CD4-positive, alpha-beta T cell (primary cell): ENCODE measurements at regions of chr3 and their contacts with region 1.

Region 1: GRCh38 chr3:119676771-119677640 is at the start of gene COX17:
- DNase-seq: peak; percentile 92 to 99 (median 95)
- ATAC-seq: peak; percentile 87
- H3K4me3 ChIP-seq: peak within 1 kb of the TSS; percentile 68
- H3K4me3 Mint-ChIP-seq: peak within 1 kb of the TSS; percentile 87
- H3K27ac ChIP-seq: peak within 1 kb of the TSS; percentile 81 to 85
- H3K27ac Mint-ChIP-seq: peak within 1 kb of the TSS; percentile 91
- H3K4me1 ChIP-seq: peaks cover 8% of the 10 kb centered on the region
- H3K4me1 Mint-ChIP-seq: peaks cover 36% of the 10 kb centered on the region
- H3K27me3 ChIP-seq: no peaks in the 10 kb centered on the region
- H3K27me3 Mint-ChIP-seq: no peaks in the 10 kb centered on the region
- CTCF ChIP-seq: no peak
- total RNA-seq, gene COX17: 24.6 to 26.3 TPM

Region 2: DNA sequence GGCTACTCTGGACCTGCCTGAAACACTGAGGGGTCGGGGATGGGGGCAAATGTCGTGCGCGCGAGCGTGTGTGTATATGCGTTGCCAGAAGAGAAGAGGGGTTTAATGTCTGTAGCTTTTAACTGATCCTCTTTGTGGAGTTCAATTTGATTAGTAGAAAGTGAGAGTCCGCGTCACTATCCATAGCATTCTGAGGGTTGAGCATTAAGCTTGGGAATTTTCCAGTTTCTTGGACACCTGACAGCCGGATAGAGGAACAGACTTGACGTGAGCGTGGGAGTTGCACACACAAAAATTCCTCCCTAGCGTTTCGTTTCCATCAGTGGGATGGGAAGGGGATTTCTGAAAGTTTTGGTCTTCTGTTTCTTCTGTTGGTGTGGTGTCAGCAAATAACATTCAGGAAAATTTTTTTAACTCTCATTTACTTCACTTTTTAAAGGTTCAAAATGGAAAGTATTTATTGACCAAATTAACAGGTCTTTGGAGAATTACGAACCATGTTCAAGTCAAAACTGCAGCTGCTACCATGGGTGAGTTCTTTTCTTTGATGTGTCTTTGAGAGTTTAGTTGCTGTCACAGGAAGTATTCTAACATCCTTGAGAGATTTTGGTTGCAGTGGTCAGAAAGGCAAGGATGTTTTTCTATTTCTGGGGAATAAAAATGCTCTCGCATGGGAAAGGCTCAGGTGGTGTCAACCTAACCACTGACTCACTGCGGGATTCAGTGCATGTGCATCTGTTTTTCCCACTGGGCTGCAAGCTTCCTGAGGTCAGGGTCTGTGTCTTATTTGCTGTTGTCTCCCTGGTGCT is 207.4 kb before region 1 on chr3:
- CTCF ChIA-PET with region 1: no interaction called
- POLR2A ChIA-PET with region 1: no interaction called
- intact Hi-C with region 1: loop called in 1 of 2 experiments (anchors 5 kb)
- DNase-seq: peak in 3 of 14 experiments; percentile 21 to 32 (median 27)
- ATAC-seq: peak; percentile 20
- H3K4me3 ChIP-seq: peak overlapping the region; percentile 86
- H3K4me3 Mint-ChIP-seq: peak overlapping the region; percentile 98
- H3K27ac ChIP-seq: peak overlapping the region; percentile 37 to 81
- H3K27ac Mint-ChIP-seq: peak overlapping the region; percentile 90
- H3K4me1 ChIP-seq: peaks cover 28% of the 10 kb centered on the region
- H3K4me1 Mint-ChIP-seq: peaks cover 29% of the 10 kb centered on the region
- H3K27me3 ChIP-seq: no peaks in the 10 kb centered on the region
- H3K27me3 Mint-ChIP-seq: no peaks in the 10 kb centered on the region
- CTCF ChIP-seq: no peak

Region 3: DNA sequence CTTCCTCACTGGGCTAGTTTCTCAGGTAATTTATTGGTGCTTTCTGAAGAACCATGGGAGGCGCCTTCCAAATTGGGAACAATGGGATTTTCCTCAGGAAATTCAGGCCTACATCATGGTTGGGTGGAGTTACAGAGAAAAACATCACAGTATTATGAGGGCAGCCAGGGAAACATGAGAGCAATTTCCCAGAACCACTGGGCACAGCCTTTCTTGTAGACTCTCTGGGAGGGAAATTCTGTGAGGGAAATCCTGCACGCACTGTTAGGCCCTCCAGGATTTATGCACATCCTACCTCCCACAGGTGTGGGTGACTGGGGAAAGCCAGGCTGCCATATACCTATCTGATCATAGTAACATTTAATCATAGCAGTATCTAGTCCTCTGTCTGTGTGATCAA is 29.8 kb before region 1 on chr3:
- CTCF ChIA-PET with region 1: no interaction called
- POLR2A ChIA-PET with region 1: no interaction called
- intact Hi-C with region 1: no loop called
- DNase-seq: no peak
- ATAC-seq: no peak
- H3K4me3 ChIP-seq: no peak overlapping the region
- H3K4me3 Mint-ChIP-seq: no peak overlapping the region
- H3K27ac ChIP-seq: no peak overlapping the region
- H3K27ac Mint-ChIP-seq: no peak overlapping the region
- H3K4me1 ChIP-seq: no peaks in the 10 kb centered on the region
- H3K4me1 Mint-ChIP-seq: no peaks in the 10 kb centered on the region
- H3K27me3 ChIP-seq: no peaks in the 10 kb centered on the region
- H3K27me3 Mint-ChIP-seq: no peaks in the 10 kb centered on the region
- CTCF ChIP-seq: no peak

Region 4: GRCh38 chr3:119945291-119945690 is 268.3 kb after region 1 on chr3:
- CTCF ChIA-PET with region 1: no interaction called
- POLR2A ChIA-PET with region 1: no interaction called
- intact Hi-C with region 1: no loop called
- DNase-seq: no peak
- ATAC-seq: no peak
- H3K4me3 ChIP-seq: no peak overlapping the region
- H3K4me3 Mint-ChIP-seq: no peak overlapping the region
- H3K27ac ChIP-seq: no peak overlapping the region
- H3K27ac Mint-ChIP-seq: no peak overlapping the region
- H3K4me1 ChIP-seq: peaks cover 2% of the 10 kb centered on the region
- H3K4me1 Mint-ChIP-seq: peaks cover 47% of the 10 kb centered on the region
- H3K27me3 ChIP-seq: no peaks in the 10 kb centered on the region
- H3K27me3 Mint-ChIP-seq: no peaks in the 10 kb centered on the region
- CTCF ChIP-seq: no peak

Region 5: GRCh38 chr3:121654493-121655385 is 1977.7 kb after region 1 on chr3:
- CTCF ChIA-PET with region 1: no interaction called
- POLR2A ChIA-PET with region 1: no interaction called
- intact Hi-C with region 1: loop called in 1 of 2 experiments (anchors 10 kb)
- DNase-seq: peak in 3 of 14 experiments; percentile 36 to 60 (median 40)
- ATAC-seq: peak; percentile 73
- H3K4me3 ChIP-seq: no peak overlapping the region
- H3K4me3 Mint-ChIP-seq: peak overlapping the region; percentile 34
- H3K27ac ChIP-seq: peak overlapping the region in 1 of 2 donors; percentile 62
- H3K27ac Mint-ChIP-seq: peak overlapping the region; percentile 76
- H3K4me1 ChIP-seq: peaks cover 52% of the 10 kb centered on the region
- H3K4me1 Mint-ChIP-seq: peaks cover 86% of the 10 kb centered on the region
- H3K27me3 ChIP-seq: no peaks in the 10 kb centered on the region
- H3K27me3 Mint-ChIP-seq: no peaks in the 10 kb centered on the region
- CTCF ChIP-seq: no peak